Activated B cell treated with CpG ODN at 0.5 μM for 24 hours (primary cell): ENCODE measurements at regions of chr20 and their contacts with region 1.

Region 1: DNA sequence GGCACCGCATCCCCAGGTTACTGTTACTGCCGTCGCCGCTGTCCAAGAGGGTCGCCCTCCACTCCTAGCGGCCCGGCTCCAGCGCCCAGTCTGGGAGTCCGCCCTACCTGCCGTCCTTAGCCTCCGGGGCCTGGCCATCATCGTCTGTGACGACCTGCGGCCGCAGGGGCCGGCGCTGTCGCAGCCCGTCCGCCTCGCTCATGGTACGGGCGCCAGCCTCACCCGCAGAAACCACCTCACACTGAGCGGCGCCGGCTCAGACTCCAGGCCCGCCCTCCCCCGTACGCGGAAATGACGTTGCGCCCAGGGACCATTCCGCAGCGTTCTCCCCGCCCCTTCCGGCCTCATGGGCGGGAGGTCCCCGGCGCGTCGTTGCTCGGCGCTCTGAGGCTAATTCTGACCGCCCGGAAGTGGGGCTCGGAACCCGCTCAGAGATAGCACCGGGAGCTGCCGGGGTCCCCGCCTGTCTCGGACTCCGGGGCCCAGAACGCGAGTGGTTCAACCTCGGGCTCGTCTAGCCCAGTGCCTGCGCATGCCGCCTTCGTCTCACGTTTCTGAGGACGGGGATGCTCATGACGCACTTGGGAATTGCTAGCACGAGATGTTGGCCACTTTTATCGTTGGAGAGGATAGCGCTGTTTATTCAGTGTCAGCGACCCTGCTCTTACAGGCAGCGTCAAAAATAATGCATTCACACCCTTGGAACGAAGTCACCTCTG is at the start of gene APMAP:
- DNase-seq: peak; percentile 97
- ATAC-seq: peak; percentile 90
- H3K4me3 Mint-ChIP-seq: peak within 1 kb of the TSS; percentile 92
- H3K27ac Mint-ChIP-seq: peak within 1 kb of the TSS; percentile 95
- H3K4me1 Mint-ChIP-seq: peaks cover 48% of the 10 kb centered on the region
- H3K27me3 Mint-ChIP-seq: no peaks in the 10 kb centered on the region
- CTCF ChIP-seq: no peak
- total RNA-seq, gene APMAP: 22.3 and 24.9 TPM in 2 replicates

Region 2: GRCh38 chr20:23937303-23938117 is 1055.1 kb before region 1 on chr20:
- CTCF ChIA-PET with region 1: no interaction called
- POLR2A ChIA-PET with region 1: no interaction called
- intact Hi-C with region 1: loop called (anchors 5 kb)
- DNase-seq: no peak
- ATAC-seq: peak; percentile 31
- H3K4me3 Mint-ChIP-seq: no peak overlapping the region
- H3K27ac Mint-ChIP-seq: no peak overlapping the region
- H3K4me1 Mint-ChIP-seq: no peaks in the 10 kb centered on the region
- H3K27me3 Mint-ChIP-seq: peaks cover 2% of the 10 kb centered on the region
- CTCF ChIP-seq: no peak

Region 3: DNA sequence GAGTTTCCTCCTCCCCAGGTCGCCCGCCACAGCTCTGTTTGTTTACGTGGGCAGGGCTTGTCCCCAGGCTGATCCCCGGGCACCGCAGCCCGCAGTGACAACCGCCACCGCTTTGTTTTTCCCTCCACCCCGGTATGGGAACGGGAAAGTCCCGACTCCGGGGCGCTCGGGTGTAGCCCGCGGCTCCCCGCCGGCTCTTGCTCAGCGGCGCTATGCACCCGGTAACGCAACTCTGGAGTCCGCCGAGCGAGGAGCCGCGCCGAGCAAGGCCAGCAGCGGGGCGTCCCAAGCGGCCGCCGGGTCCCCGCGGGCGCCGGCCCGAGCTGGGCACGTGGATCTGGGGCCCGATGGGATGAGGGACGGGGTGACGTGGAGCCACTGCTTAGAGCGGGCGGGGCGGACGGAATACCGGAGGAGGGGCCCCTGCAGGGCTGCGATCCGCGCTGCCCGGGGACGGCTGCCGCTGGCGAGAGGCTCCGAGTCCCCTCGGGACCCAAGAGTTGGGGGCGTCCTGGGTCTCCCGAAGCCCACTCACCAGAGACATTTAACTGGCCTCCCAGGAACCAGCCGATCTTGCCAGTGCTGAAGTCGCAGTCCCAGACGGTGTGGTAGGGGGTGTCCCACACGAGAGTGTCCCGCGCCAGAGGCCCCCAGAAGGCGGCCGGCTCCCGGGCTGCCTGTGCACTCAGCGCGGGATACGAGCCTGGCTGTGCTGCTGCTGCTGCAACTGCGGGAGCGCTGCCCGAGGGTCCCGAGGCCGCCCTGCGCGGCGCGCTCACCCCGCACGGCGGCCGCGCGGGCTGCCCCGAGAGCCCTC is 64.8 kb after region 1 on chr20:
- CTCF ChIA-PET with region 1: interaction called, 113 read pairs
- POLR2A ChIA-PET with region 1: interaction called, 35 read pairs
- intact Hi-C with region 1: loop called (anchors 1 kb)
- DNase-seq: peak; percentile 72
- ATAC-seq: peak; percentile 42
- H3K4me3 Mint-ChIP-seq: peak overlapping the region; percentile 89
- H3K27ac Mint-ChIP-seq: peak overlapping the region; percentile 93
- H3K4me1 Mint-ChIP-seq: peaks cover 61% of the 10 kb centered on the region
- H3K27me3 Mint-ChIP-seq: no peaks in the 10 kb centered on the region
- CTCF ChIP-seq: no peak

Region 4: GRCh38 chr20:25195014-25195961 is 202.6 kb after region 1 on chr20 and contains the start of gene ENTPD6:
- CTCF ChIA-PET with region 1: no interaction called
- POLR2A ChIA-PET with region 1: interaction called, 3 read pairs
- intact Hi-C with region 1: loop called (anchors 1 kb)
- DNase-seq: peak; percentile 99
- ATAC-seq: peak; percentile 82
- H3K4me3 Mint-ChIP-seq: peak within 1 kb of the TSS; percentile 90
- H3K27ac Mint-ChIP-seq: peak within 1 kb of the TSS; percentile 86
- H3K4me1 Mint-ChIP-seq: peaks cover 20% of the 10 kb centered on the region
- H3K27me3 Mint-ChIP-seq: no peaks in the 10 kb centered on the region
- CTCF ChIP-seq: no peak
- total RNA-seq, gene ENTPD6: 37.2 and 44.4 TPM in 2 replicates

Region 5: DNA sequence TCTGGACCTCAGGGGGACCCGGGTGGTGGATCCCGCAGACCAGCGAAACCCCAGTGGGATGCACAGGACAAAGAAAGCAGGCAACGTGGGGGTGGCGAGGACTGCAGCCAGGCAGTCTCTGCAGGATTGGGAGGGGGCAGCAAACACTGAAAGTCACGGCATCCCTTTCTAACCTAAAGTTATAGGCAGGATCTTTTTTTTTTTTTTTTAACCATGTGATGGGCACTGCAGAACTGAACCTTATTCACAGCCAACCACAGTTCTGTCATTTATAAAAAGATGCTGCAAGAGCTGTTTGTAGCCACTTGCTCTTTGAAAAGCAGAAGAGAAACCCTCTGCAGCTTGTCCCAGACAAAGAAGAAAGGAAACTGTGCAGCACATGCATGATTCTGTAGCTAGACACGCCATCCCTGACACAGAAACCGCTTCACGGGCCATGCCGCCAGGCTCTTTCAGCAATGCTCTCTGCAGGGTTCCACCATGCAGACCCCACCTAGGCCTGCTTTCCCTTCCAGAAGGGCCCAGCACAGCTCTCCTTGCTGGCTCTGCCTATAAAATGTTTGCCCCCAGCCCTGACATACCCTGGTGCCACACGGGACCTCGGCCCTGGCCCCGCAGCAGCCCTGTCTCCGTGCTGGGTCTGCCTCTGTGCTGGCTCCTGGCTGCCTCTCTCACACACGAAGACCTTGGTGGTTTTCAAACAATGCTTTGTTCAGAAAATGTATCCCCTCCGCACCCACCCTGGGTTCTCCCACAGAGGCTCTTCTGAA is 326.0 kb after region 1 on chr20:
- CTCF ChIA-PET with region 1: no interaction called
- POLR2A ChIA-PET with region 1: no interaction called
- intact Hi-C with region 1: loop called (anchors 5 kb)
- DNase-seq: peak; percentile 24
- ATAC-seq: peak; percentile 93
- H3K4me3 Mint-ChIP-seq: peak overlapping the region; percentile 52
- H3K27ac Mint-ChIP-seq: peak overlapping the region; percentile 87
- H3K4me1 Mint-ChIP-seq: peaks cover 39% of the 10 kb centered on the region
- H3K27me3 Mint-ChIP-seq: no peaks in the 10 kb centered on the region
- CTCF ChIP-seq: no peak

Region 6: DNA sequence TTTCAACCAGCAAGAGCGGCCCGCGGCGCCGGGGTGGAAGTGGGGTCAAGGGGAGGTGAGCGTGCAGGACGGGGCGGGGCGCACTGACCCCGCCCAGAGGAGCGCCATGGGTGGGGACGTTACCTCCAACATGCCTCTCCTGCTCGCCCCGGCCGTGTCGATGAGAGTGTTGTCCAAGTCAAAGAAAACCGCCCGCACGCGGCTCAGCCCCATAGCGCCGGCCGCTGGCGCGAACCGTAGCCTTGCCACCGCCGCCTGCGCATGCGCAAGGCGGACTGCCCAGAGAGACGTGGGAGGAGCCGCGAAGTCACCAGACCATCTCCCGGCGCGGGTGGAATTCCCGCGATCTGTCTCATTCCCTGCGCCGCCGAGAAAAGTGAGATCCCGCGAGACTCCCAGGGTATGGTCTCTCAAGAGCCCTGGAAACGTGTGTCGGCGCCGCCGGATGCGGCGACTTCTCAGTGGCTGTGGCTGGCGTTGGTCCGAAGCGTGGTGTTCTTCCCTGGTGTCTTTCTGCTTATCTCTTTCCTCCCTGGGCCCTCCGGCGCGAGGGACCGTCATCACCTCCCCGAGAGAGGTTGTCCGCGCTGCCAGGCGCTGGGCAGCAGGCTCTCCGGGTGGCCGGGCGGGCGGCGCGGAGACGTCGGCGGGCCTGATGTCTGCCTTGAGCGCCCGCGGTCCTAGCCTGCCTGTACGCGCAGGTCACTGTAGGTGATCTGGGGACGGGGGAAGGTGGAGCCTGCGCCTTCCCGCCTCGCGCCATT is 631.3 kb after region 1 on chr20 and contains the start of gene NANP:
- CTCF ChIA-PET with region 1: no interaction called
- POLR2A ChIA-PET with region 1: no interaction called
- intact Hi-C with region 1: loop called (anchors 2 kb)
- DNase-seq: peak; percentile 88
- ATAC-seq: peak; percentile 84
- H3K4me3 Mint-ChIP-seq: peak within 1 kb of the TSS; percentile 92
- H3K27ac Mint-ChIP-seq: peak within 1 kb of the TSS; percentile 92
- H3K4me1 Mint-ChIP-seq: peaks cover 25% of the 10 kb centered on the region
- H3K27me3 Mint-ChIP-seq: no peaks in the 10 kb centered on the region
- CTCF ChIP-seq: no peak
- total RNA-seq, gene NANP: 2.3 and 2.7 TPM in 2 replicates